Calu3 (cell line): ENCODE measurements at regions of chr5 and their contacts with region 1.

Region 1: GRCh38 chr5:717143-717542 is 24.0 kb upstream of the TPPP start:
- DNase-seq: no peak
- H3K4me3 Mint-ChIP-seq: no peak overlapping the region
- H3K27ac Mint-ChIP-seq: no peak overlapping the region
- H3K4me1 Mint-ChIP-seq: no peaks in the 10 kb centered on the region
- H3K27me3 Mint-ChIP-seq: peaks cover 81% of the 10 kb centered on the region
- CTCF ChIP-seq: no peak

Region 2: DNA sequence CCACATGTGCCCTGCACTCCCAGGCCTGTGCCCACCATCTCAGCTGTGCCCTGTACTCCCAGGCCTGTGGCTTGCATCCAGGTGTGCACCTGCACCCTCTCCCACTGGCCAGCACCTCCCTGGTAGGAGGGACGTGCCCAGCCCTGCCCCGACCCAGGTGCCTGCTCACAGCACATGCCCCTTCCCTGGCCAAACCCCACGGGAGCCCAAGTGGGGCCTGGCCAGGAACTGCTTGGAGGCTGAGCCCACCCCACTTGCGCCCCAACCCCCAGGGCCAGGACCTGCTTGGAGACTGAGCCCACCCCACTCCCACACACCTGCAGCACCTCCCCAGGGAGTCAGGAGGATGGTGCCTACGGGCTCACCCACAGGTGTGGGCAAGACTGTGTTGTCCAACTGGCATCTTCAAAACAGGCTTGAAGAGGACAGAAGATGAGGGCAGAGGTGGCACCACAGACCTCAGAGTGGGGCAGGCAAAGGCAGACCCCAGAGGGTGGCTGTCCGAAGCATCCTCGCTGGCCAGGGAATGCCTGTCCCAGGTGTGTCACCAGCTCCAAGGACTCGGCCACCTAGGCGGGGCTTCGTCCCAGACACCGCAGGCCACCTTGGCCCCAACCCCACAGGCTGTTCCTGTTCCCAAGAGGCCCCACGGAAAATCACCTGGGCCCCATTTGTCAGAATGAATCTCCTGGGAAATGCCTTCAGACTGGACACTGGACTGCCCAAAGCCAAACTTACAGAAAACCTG is 56.5 kb after region 1 on chr5:
- CTCF ChIA-PET with region 1: no interaction called
- intact Hi-C with region 1: no loop called
- DNase-seq: no peak
- H3K4me3 Mint-ChIP-seq: no peak overlapping the region
- H3K27ac Mint-ChIP-seq: no peak overlapping the region
- H3K4me1 Mint-ChIP-seq: no peaks in the 10 kb centered on the region
- H3K27me3 Mint-ChIP-seq: peaks cover 15% of the 10 kb centered on the region
- CTCF ChIP-seq: no peak

Region 3: GRCh38 chr5:801472-801871 is 84.3 kb after region 1 on chr5:
- CTCF ChIA-PET with region 1: no interaction called
- intact Hi-C with region 1: loop called (anchors 5 kb)
- DNase-seq: no peak
- H3K4me3 Mint-ChIP-seq: no peak overlapping the region
- H3K27ac Mint-ChIP-seq: no peak overlapping the region
- H3K4me1 Mint-ChIP-seq: no peaks in the 10 kb centered on the region
- H3K27me3 Mint-ChIP-seq: peaks cover 16% of the 10 kb centered on the region
- CTCF ChIP-seq: no peak